ENCODE measurements at regions of chr7 and their contacts with region 1.

Region 1: DNA sequence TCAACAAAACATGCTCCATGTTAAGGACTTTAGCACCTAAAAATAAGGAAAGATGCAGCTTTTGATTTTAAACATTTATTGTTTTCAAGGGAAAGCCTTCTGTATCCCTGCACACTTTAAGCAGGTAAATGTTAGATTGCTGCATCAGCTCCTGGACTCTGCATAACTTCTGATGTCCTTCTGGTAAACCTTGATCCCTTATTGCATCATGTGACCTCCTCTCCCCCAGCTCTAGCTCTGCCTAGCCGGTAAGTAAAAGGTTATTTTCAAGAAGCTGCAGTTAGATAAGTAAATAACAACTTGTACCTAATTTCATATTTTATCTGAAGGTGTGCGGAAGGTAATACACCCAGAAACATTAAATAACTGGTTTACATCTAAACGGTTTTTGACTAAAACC is 37.5 kb downstream of the PDK4 start:
- DNase-seq: no peak
- H3K4me3 ChIP-seq: no peak overlapping the region
- H3K27ac ChIP-seq: no peak overlapping the region
- H3K4me1 ChIP-seq: no peaks in the 10 kb centered on the region
- H3K27me3 ChIP-seq: no peaks in the 10 kb centered on the region

Region 2: GRCh38 chr7:95545078-95545498 is 13.8 kb before region 1 on chr7:
- CTCF ChIA-PET with region 1: interaction called, 10 read pairs
- POLR2A ChIA-PET with region 1: no interaction called
- DNase-seq: peak; percentile 16 to 42 (median 33)
- H3K4me3 ChIP-seq: peak overlapping the region in 1 of 7 experiments; percentile 41
- H3K27ac ChIP-seq: no peak overlapping the region
- H3K4me1 ChIP-seq: peaks cover 0 to 3% (median 0%) of the 10 kb centered on the region in 4 experiments
- H3K27me3 ChIP-seq: no peaks in the 10 kb centered on the region

Region 3: GRCh38 chr7:95577137-95577536 is 18.3 kb after region 1 on chr7:
- CTCF ChIA-PET with region 1: no interaction called
- POLR2A ChIA-PET with region 1: no interaction called
- DNase-seq: no peak
- H3K4me3 ChIP-seq: no peak overlapping the region
- H3K27ac ChIP-seq: no peak overlapping the region
- H3K4me1 ChIP-seq: no peaks in the 10 kb centered on the region
- H3K27me3 ChIP-seq: no peaks in the 10 kb centered on the region

Measured in common myeloid progenitor, CD34-positive (primary cell).